Naive thymus-derived CD8-positive, alpha-beta T cell (primary cell): ENCODE measurements at regions of chr1 and their contacts with region 1.

Region 1: GRCh38 chr1:44775078-44775929 is at the start of gene RPS8:
- DNase-seq: peak; percentile 67 to 95 (median 87)
- ATAC-seq: peak; percentile 82 to 83
- H3K4me3 Mint-ChIP-seq: peak within 1 kb of the TSS; percentile 84 to 100 (median 93)
- H3K27ac Mint-ChIP-seq: peak within 1 kb of the TSS; percentile 92 to 99 (median 96)
- H3K4me1 Mint-ChIP-seq: peaks cover 23 to 42% (median 34%) of the 10 kb centered on the region in 4 donors
- H3K27me3 Mint-ChIP-seq: no peaks in the 10 kb centered on the region
- polyA plus RNA-seq, gene RPS8: 1,336 to 1,571 (median 1,431) TPM

Region 2: GRCh38 chr1:44721485-44722361 is 53.6 kb before region 1 on chr1:
- POLR2A ChIA-PET with region 1: interaction called, 109 read pairs
- DNase-seq: peak; percentile 17 to 85 (median 74)
- ATAC-seq: peak; percentile 84 to 90
- H3K4me3 Mint-ChIP-seq: peak overlapping the region; percentile 42 to 85 (median 79)
- H3K27ac Mint-ChIP-seq: peak overlapping the region; percentile 93 to 99 (median 96)
- H3K4me1 Mint-ChIP-seq: peaks cover 50 to 80% (median 78%) of the 10 kb centered on the region in 4 donors
- H3K27me3 Mint-ChIP-seq: no peaks in the 10 kb centered on the region

Region 3: DNA sequence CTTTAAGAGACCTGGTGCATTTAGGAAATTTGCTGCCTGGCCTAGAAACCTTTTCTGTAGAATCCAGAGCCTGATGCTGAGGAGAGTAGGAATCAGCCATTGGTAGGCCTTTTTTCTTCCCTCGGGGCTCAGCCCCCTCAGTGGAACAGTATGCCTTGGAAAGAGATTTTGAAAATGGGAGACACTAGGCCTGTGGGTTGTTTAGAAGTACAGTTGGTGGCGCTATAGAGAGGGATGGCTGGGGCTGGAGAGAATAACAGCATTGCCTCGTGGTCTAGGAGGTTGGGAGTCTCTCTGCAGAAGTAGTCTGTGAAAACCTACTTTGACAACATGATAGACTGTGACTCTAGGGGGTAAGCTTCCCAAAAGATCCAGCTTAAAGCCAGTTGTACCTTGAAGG is 27.4 kb before region 1 on chr1:
- POLR2A ChIA-PET with region 1: interaction called, 11 read pairs
- DNase-seq: no peak
- ATAC-seq: no peak
- H3K4me3 Mint-ChIP-seq: no peak overlapping the region
- H3K27ac Mint-ChIP-seq: no peak overlapping the region
- H3K4me1 Mint-ChIP-seq: peaks cover 0 to 3% (median under 1%) of the 10 kb centered on the region in 4 donors
- H3K27me3 Mint-ChIP-seq: no peaks in the 10 kb centered on the region

Region 4: DNA sequence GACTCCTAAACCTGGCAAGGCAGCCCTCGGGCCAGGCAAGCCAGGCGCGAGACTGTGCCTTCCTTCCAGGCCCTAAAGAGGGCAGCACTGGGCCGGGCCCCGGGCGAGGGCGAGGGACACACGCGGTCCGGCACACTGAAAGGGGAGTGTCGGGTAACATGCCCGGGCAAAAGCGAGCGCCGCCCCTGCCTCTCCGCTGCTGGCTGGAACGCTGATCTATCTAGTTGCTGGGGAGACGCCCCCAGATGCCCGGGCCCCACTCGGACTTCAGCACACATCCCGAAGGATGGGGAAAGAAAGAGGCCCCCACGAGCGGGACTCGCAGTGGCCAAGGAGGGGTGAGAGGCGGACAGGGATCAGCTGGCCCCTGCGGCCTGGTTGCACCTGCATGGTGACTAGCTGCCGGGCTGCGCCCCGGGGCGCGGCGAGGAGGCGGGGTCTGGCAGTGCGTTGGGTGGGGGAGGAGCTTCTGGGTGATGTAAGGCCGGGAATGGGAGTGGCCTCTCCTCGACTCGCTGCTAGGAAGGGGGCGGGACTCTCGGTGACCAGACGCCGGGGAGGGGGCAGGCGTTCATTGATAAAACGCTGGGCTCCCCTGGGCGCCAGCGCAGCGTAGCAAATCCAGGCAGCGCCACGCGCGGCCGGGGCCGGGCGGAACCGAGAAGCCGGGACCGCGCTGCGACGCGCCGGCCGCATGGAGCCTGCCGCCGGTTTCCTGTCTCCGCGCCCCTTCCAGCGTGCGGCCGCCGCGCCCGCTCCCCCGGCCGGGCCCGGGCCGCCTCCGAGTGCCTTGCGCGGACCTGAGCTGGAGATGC is 24.7 kb after region 1 on chr1 and contains the start of gene PLK3:
- POLR2A ChIA-PET with region 1: interaction called, 32 read pairs
- DNase-seq: peak; percentile 97 to 99 (median 98)
- ATAC-seq: peak; percentile 78 to 81
- H3K4me3 Mint-ChIP-seq: peak within 1 kb of the TSS; percentile 72 to 99 (median 97)
- H3K27ac Mint-ChIP-seq: peak within 1 kb of the TSS; percentile 89 to 99 (median 99)
- H3K4me1 Mint-ChIP-seq: peaks cover 17 to 48% (median 45%) of the 10 kb centered on the region in 4 donors
- H3K27me3 Mint-ChIP-seq: no peaks in the 10 kb centered on the region
- polyA plus RNA-seq, gene PLK3: 14.3 to 36.0 (median 25.5) TPM

Region 5: DNA sequence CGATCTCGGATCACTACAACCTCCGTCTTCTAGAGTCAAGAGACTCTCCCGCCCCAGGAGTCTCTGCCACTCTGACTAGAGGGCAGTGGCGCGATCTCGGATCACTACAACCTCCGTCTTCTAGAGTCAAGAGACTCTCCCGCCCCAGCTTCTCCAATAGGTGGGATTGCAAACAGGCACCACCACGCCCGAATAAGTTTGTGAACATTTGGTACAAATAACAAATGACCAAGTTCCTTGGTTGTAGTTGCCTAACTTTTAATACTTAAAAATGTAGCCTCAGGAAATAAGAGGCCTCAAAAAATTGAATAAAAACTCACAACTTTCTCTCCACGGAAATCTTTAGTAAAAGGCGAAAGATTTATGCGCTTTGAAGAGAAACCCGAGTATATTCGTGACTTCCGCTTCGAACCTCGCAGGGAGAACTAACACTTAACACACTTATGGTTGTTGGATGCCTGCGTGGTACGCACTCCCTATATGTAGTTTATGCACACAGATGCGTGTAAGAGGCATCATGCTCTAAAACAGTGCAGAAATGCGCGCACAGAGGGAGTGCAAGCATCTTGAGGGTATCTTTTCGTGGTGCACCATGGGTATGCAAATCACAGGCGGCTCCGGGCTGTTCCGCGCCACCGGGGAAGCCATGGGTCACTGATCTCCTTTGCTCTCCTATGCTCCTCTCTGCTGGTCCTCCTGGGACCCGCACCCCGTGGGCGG is 44.5 kb after region 1 on chr1:
- POLR2A ChIA-PET with region 1: interaction called, 40 read pairs
- DNase-seq: peak; percentile 61 to 98 (median 80)
- ATAC-seq: peak; percentile 78 to 79
- H3K4me3 Mint-ChIP-seq: peak overlapping the region; percentile 92 to 97 (median 94)
- H3K27ac Mint-ChIP-seq: peak overlapping the region; percentile 100
- H3K4me1 Mint-ChIP-seq: peaks cover 23 to 55% (median 42%) of the 10 kb centered on the region in 4 donors
- H3K27me3 Mint-ChIP-seq: no peaks in the 10 kb centered on the region

Region 6: GRCh38 chr1:44862829-44863401 is 87.6 kb after region 1 on chr1:
- POLR2A ChIA-PET with region 1: no interaction called
- DNase-seq: no peak
- ATAC-seq: no peak
- H3K4me3 Mint-ChIP-seq: no peak overlapping the region
- H3K27ac Mint-ChIP-seq: no peak overlapping the region
- H3K4me1 Mint-ChIP-seq: peaks cover 0 to 11% (median 0%) of the 10 kb centered on the region in 4 donors
- H3K27me3 Mint-ChIP-seq: no peaks in the 10 kb centered on the region

Region 7: GRCh38 chr1:45303582-45304310 is 528.4 kb after region 1 on chr1:
- POLR2A ChIA-PET with region 1: interaction called, 15 read pairs
- DNase-seq: peak; percentile 86 to 98 (median 96)
- ATAC-seq: peak; percentile 83 to 86
- H3K4me3 Mint-ChIP-seq: peak overlapping the region; percentile 88 to 96 (median 92)
- H3K27ac Mint-ChIP-seq: peak overlapping the region; percentile 91 to 98 (median 96)
- H3K4me1 Mint-ChIP-seq: peaks cover 5 to 37% (median 20%) of the 10 kb centered on the region in 4 donors
- H3K27me3 Mint-ChIP-seq: no peaks in the 10 kb centered on the region